ENCODE measurements at regions of chr4 and their contacts with region 1.

Region 1: GRCh38 chr4:20773144-20773997 is 73.1 kb downstream of the PACRGL start:
- DNase-seq: peak; percentile 20
- H3K4me3 ChIP-seq: no peak overlapping the region
- H3K27ac ChIP-seq: no peak overlapping the region
- H3K4me1 ChIP-seq: peaks cover 0 to 10% (median 1%) of the 10 kb centered on the region in 4 donors
- H3K27me3 ChIP-seq: no peaks in the 10 kb centered on the region
- CTCF ChIP-seq: peak; percentile 62 to 70 (median 66)
- EP300 ChIP-seq: no peak
- POLR2A ChIP-seq: no peak

Region 2: GRCh38 chr4:21469438-21470300 is 696.3 kb after region 1 on chr4:
- in situ Hi-C with region 1: loop called in 3 of 4 experiments (anchors 25 kb)
- intact Hi-C with region 1: no loop called
- DNase-seq: no peak
- H3K4me3 ChIP-seq: no peak overlapping the region
- H3K27ac ChIP-seq: no peak overlapping the region
- H3K4me1 ChIP-seq: no peaks in the 10 kb centered on the region
- H3K27me3 ChIP-seq: no peaks in the 10 kb centered on the region
- CTCF ChIP-seq: peak; percentile 19 to 50 (median 38)
- EP300 ChIP-seq: no peak
- POLR2A ChIP-seq: no peak